ENCODE measurements at regions of chr20 and their contacts with region 1.

Region 1: DNA sequence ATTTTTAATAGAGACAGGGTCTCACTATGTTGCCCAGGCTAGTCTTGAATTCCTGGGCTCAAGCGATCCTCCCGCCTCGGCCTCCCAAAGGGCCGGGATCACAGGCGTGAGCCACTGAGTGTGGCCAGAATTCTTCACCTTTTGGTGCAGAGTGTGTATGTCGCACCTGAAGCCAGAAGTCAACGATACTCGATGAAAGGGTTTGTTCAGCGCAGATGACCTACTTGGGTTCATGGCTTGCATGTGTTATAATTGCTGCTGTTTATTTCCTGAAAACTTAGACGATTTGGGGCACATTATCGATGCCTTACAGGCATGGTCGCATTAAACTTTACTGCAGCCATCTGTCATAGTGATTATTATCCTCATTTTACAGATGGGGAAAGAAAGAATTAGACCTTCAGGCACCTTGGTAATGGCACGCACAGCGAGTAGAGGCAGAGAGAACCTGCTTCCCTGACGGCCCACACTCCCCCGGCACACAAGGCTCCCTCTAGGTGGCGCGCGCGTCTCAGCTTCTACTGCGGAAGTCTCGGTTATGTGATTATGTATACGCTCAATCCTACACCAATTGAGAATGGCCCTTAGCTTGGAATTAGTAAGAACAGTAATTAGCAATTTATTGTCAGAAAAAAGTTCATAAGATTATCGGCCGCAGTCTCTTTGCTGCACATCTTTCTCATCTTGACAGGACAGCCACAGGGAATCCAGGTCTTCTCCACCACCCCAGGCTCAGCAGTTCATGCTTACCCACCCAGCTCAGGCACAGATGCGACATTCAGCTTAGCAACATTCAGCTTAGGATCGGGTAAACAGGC is 212.8 kb upstream of the PROKR2 start:
- DNase-seq: peak; percentile 89
- ATAC-seq: peak; percentile 88
- H3K4me3 Mint-ChIP-seq: peak overlapping the region; percentile 39; the same call in 1 of the 2 replicates
- H3K27ac Mint-ChIP-seq: no peak overlapping the region
- H3K4me1 Mint-ChIP-seq: 0 out of 2 replicates have a peak, but pooled peaks cover 3% of the 10 kb centered on the region
- H3K27me3 Mint-ChIP-seq: no peaks in the 10 kb centered on the region; the same call in 1 of the 2 replicates
- CTCF ChIP-seq: peak; percentile 51

Region 2: DNA sequence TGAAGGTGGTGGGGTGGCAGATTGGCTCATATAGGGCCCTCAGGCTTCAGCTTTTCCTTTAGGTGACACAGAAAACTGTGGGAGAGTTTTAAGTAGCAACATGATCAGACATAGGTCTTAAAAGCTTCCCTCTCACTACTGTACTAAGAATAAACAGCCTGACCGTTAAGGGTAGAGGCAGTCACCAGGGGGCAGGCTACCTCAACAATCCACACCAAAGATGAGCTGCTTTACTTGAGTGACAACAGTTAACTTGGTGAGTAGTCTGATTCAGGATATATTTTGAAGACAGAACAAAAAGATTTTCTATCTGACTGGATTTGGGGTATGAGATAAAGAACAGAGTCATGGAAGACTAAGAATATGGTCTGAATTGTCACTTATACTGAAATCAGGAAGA is 27.6 kb after region 1 on chr20:
- CTCF ChIA-PET with region 1: interaction called, 22 read pairs
- POLR2A ChIA-PET with region 1: no interaction called
- DNase-seq: peak; percentile 69
- ATAC-seq: peak; percentile 85
- H3K4me3 Mint-ChIP-seq: no peak overlapping the region
- H3K27ac Mint-ChIP-seq: no peak overlapping the region
- H3K4me1 Mint-ChIP-seq: peaks cover 8% of the 10 kb centered on the region
- H3K27me3 Mint-ChIP-seq: no peaks in the 10 kb centered on the region
- CTCF ChIP-seq: peak; percentile 49

Region 3: DNA sequence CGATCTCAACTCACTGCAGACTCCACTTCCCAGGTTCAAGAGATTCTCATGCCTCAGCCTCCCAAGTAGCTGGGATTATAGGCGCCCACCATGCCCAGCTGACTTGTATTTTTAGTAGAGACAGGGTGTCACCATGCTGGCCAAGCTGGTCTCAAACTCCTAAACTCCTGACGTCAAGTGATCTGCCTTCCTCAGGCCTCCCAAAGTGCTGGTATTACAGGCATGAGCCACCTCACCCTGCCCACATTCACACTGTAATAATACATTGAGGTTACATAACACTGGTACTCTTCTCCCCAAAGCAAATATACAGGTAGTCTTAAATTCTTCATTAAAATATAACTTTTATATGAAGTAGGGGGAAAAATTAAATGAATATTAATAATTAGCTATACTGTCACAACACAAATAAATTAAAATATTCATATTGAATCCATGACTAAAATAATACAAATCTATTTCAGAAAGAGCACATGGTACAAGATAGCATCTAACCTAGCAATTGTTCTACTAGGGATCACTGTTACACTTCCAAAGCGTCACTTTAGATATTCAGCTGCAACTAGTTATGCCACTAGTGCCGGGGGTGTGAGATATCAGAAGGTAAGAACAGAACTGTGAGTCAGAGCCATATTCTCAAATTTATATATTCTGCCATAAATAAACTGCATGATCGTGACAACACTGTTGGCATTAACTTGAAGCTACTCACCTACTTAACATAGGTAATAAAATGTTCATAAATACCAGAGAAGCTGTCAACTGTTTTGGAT is 51.6 kb after region 1 on chr20:
- CTCF ChIA-PET with region 1: no interaction called
- POLR2A ChIA-PET with region 1: no interaction called
- DNase-seq: no peak
- ATAC-seq: no peak
- H3K4me3 Mint-ChIP-seq: no peak overlapping the region
- H3K27ac Mint-ChIP-seq: no peak overlapping the region
- H3K4me1 Mint-ChIP-seq: no peaks in the 10 kb centered on the region
- H3K27me3 Mint-ChIP-seq: no peaks in the 10 kb centered on the region
- CTCF ChIP-seq: no peak

Region 4: DNA sequence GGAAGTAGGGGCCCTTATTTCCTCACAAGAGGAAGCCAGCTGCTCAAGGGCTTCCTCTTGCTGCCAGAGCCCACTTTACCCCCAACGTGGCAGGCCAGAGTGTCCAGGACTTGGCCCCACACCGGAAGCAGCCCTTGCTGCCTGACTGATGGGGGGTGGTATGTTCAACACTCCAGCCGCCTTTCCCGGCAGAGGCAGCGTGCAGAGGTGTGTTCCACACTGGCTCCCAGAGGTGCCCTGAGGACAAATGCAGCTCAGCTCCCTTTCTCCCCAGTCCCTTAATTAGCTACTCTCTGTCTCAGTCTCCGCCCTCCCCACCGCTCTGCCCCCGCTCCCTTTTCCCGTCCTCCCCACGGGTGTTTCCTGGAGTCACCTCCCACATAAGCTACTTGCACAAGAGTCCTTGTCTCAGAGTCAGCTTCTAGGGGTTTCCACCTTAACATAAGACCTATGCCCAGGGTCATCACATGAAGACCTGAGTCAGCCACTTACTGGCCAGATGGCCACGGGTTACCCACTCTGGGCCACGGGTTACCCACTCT is 159.0 kb after region 1 on chr20:
- CTCF ChIA-PET with region 1: no interaction called
- POLR2A ChIA-PET with region 1: no interaction called
- DNase-seq: no peak
- ATAC-seq: no peak
- H3K4me3 Mint-ChIP-seq: no peak overlapping the region
- H3K27ac Mint-ChIP-seq: no peak overlapping the region
- H3K4me1 Mint-ChIP-seq: no peaks in the 10 kb centered on the region
- H3K27me3 Mint-ChIP-seq: no peaks in the 10 kb centered on the region; the same call in 1 of the 2 replicates
- CTCF ChIP-seq: no peak

Region 5: GRCh38 chr20:5788385-5788895 is 258.9 kb after region 1 on chr20:
- CTCF ChIA-PET with region 1: interaction called, 62 read pairs
- POLR2A ChIA-PET with region 1: no interaction called
- DNase-seq: peak; percentile 67
- ATAC-seq: peak; percentile 96
- H3K4me3 Mint-ChIP-seq: no peak overlapping the region
- H3K27ac Mint-ChIP-seq: no peak overlapping the region
- H3K4me1 Mint-ChIP-seq: peaks cover 9% of the 10 kb centered on the region
- H3K27me3 Mint-ChIP-seq: no peaks in the 10 kb centered on the region
- CTCF ChIP-seq: peak; percentile 82

Region 6: DNA sequence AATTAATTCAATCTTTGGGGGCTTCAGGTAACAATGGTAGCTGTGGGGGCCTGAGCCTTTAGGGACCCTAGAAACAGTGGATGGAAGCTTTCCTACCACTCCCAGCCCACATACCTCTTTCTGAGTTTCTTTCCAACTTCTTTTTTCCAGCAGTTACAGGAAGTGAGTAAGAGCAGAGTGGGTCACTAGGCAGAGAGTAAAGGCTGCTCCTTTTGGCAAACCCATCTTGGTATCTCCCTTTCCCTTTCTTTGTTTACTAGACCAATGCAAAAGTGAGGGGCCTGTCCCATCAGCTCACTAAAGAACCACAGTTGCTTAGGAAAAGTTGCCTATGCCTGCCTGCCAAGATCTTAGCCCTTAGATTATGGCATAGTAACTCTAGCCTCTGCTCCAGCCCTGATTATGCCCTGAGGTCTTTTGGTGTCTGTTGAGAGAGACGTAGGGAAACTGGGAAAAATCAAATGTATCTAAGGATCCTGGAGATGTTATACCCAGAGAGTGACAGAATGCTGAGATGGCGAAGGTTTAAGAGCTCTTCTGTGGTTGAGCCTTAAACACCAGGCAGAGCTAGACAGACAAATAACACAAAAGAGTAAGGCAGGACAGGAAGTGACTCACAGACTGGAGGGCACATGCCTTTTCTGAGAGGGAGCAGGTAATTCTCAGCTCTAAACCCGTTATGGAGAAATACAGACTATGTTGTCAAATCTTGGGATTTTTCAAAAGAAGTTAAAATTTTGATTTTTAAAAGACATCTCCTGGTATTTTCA is 389.5 kb after region 1 on chr20:
- CTCF ChIA-PET with region 1: interaction called, 13 read pairs
- POLR2A ChIA-PET with region 1: no interaction called
- DNase-seq: no peak
- ATAC-seq: peak; percentile 65
- H3K4me3 Mint-ChIP-seq: no peak overlapping the region
- H3K27ac Mint-ChIP-seq: no peak overlapping the region
- H3K4me1 Mint-ChIP-seq: peaks cover 20% of the 10 kb centered on the region
- H3K27me3 Mint-ChIP-seq: peaks cover 6% of the 10 kb centered on the region; the same call in 1 of the 2 replicates
- CTCF ChIP-seq: no peak

Region 7: DNA sequence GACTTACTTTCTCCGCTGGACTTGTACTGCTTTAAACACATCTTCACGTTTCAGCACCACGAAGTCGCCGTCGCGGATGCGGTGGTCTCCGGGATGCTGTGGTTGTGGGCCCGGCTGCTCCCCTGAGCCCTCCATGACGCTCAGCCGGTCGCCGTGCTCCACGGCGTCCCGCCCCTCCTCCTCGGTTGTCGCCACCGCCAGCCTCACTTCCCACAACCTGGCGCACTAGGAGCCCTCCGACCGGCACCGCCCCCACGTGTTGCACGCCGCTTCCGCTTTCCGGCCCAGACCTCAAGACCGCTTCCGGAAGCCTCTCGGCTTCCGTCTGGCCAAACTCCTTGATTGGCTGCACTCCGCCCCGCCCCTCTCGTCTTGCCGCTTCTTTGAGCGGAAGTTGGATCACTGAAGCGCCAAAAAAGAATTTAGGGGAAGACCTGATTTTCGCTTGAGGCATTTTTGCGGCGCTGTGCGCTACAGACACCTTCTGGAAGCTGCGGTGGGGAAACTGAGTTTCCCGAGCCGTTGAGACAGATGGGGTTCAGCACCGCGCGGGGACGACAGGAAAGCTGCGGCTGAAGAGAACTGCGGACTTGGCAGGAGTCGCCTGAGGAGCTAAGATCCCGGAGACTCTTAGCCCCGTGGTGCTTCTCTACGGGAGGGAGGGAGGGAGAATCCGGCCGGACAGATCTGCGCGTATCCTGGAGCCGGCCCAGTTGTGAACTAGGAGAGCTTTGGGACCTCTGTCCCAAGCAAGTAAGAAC is 420.9 kb after region 1 on chr20 and contains the starts of genes MCM8 and TRMT6:
- CTCF ChIA-PET with region 1: interaction called, 16 read pairs
- POLR2A ChIA-PET with region 1: no interaction called
- DNase-seq: peak; percentile 97
- ATAC-seq: peak; percentile 99
- H3K4me3 Mint-ChIP-seq: peak within 1 kb of the TSS; percentile 94
- H3K27ac Mint-ChIP-seq: peak within 1 kb of the TSS; percentile 99
- H3K4me1 Mint-ChIP-seq: peaks cover 14% of the 10 kb centered on the region
- H3K27me3 Mint-ChIP-seq: no peaks in the 10 kb centered on the region
- CTCF ChIP-seq: no peak
- total RNA-seq, gene MCM8: 28.0 to 29.5 TPM (median 29.5 TPM) in 3 replicates
- total RNA-seq, gene TRMT6: 15.4 to 17.2 TPM (median 16.7 TPM) in 3 replicates